Right ventricle myocardium superior (tissue), 1 donor: ENCODE measurements at regions of chr15 and their contacts with region 1.

Region 1: GRCh38 chr15:77784395-77785292 is 151.9 kb upstream of the LINGO1 start:
- DNase-seq: no peak
- ATAC-seq: no peak

Region 2: GRCh38 chr15:77642793-77643430 is 141.7 kb before region 1 on chr15:
- intact Hi-C with region 1: loop called (anchors 10 kb)
- DNase-seq: no peak
- ATAC-seq: no peak